ENCODE measurements at regions of chr9 and their contacts with region 1.

Region 1: DNA sequence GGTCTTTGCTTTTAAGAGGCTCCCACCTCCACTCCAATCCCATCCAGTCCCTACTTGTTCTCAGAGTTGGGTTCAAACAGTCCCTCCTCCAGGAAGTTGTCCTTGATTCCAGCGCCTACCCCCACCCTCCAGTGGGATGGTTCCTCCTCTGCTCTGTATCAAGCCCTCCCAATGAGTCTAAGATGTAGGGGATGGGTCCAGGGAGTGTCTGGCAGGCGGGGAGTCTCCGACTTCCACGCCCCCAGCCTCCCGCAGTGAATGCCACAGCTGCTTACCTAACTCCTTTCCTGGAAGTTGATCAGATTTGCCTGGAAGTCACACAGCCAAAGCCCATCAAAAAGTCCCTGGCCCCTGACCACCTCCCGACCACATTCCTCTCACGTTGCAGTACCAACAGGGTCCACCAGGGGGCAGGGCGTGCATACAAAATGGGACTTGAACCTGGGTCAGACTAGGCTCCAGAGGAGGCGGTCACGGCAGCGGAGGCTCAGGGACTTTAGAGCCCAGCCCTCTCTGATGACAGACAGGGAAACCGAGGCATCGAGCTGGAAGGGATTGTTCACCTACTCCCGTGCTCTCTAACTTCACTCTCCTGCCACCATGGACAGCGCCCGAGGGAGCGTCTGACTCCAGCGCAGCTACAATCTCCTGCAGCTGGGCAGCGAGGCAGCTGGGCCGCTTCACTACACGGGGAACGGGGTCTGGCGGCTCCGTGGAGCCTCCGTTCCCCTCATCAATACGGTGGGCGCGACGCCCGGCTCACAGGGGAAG is 25.0 kb upstream of the TDRD7 start:
- DNase-seq: peak; percentile 76
- H3K4me3 Mint-ChIP-seq: no peak overlapping the region
- H3K27ac Mint-ChIP-seq: no peak overlapping the region
- H3K4me1 Mint-ChIP-seq: peaks cover 24% of the 10 kb centered on the region
- H3K27me3 Mint-ChIP-seq: peaks cover 31% of the 10 kb centered on the region

Region 2: DNA sequence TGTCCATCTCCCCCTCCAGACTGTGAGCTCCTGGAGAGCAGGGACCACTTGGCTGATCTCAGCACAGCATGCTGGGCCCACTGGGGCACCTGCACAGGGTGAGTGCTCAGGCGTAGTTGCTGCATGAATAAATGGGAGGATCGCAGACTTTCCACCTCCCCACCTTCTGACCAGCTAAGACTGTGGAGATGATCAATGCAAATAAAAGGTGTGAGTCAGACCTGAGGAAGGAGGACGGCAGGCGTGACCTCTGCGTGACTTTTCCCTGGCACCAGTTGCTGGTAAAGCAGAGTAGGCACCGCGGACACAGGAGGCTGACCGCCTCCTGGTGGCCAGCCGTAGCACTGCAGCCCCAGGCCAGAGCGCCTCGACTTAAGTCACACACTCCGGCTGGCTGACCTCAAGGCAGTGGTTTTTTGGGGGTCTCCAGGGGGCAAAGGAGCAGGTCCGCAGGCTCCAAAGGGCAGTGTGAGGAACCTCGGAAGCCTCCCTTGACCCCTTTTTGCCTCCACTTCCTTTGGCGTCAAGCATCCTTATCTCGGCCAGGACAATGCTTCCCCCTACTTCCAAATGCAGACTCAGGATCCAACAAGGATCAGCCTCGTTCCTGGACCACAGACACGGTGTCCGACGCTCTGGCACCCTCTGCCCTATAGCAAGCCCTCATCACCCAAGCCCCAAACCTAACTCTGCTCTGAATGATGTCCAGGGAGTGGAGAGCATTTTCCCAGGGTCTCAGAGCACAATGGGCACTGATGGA is 12.3 kb after region 1 on chr9:
- CTCF ChIA-PET with region 1: interaction called, 14 read pairs
- POLR2A ChIA-PET with region 1: interaction called, 15 read pairs
- DNase-seq: peak; percentile 70
- H3K4me3 Mint-ChIP-seq: no peak overlapping the region
- H3K27ac Mint-ChIP-seq: no peak overlapping the region
- H3K4me1 Mint-ChIP-seq: peaks cover 28% of the 10 kb centered on the region
- H3K27me3 Mint-ChIP-seq: peaks cover 56% of the 10 kb centered on the region

Measured in activated CD4-positive, alpha-beta memory T cell treated with anti-CD3 and anti-CD28 coated beads, Interleukin-2, amount 10 ng/mL, durations not matched to agents 7 days and 5 days (primary cell).